ENCODE measurements at regions of chr2 and their contacts with region 1.

Region 1: GRCh38 chr2:151051574-151052220 is 210.0 kb downstream of the RBM43 start:
- DNase-seq: peak; percentile 73
- H3K4me3 Mint-ChIP-seq: no peak overlapping the region
- H3K27ac Mint-ChIP-seq: no peak overlapping the region
- H3K4me1 Mint-ChIP-seq: peaks cover 16% of the 10 kb centered on the region
- H3K27me3 Mint-ChIP-seq: no peaks in the 10 kb centered on the region
- CTCF ChIP-seq: peak; percentile 76

Region 2: GRCh38 chr2:149799013-149799705 is 1252.5 kb before region 1 on chr2:
- CTCF ChIA-PET with region 1: no interaction called
- POLR2A ChIA-PET with region 1: no interaction called
- intact Hi-C with region 1: loop called (anchors 5 kb)
- DNase-seq: peak; percentile 42
- H3K4me3 Mint-ChIP-seq: no peak overlapping the region
- H3K27ac Mint-ChIP-seq: no peak overlapping the region
- H3K4me1 Mint-ChIP-seq: no peaks in the 10 kb centered on the region
- H3K27me3 Mint-ChIP-seq: no peaks in the 10 kb centered on the region
- CTCF ChIP-seq: peak; percentile 33

Region 3: DNA sequence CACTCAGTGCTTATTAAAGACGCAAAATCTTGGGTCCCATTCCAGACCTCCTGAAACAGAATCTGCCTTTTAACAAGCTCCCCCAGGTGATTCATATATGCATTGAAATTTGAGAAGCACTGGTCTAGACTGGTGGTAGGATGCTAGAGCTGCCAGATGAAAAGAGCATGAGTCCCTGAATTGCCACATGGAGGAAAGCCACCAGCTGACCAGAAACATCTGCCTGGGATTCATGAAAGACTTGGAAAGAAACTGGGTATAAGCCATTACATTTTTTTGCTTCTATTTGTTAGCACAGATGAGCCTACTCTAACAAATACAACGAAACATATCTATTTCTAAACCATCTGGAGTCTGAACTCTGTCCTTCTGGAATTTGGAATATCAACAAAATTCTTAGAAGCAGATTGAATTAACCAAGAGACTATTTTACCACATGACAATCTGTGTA is 18.9 kb before region 1 on chr2:
- CTCF ChIA-PET with region 1: interaction called, 13 read pairs
- POLR2A ChIA-PET with region 1: no interaction called
- intact Hi-C with region 1: no loop called
- DNase-seq: peak; percentile 53
- H3K4me3 Mint-ChIP-seq: no peak overlapping the region
- H3K27ac Mint-ChIP-seq: no peak overlapping the region
- H3K4me1 Mint-ChIP-seq: peaks cover 15% of the 10 kb centered on the region
- H3K27me3 Mint-ChIP-seq: no peaks in the 10 kb centered on the region
- CTCF ChIP-seq: no peak

Region 4: DNA sequence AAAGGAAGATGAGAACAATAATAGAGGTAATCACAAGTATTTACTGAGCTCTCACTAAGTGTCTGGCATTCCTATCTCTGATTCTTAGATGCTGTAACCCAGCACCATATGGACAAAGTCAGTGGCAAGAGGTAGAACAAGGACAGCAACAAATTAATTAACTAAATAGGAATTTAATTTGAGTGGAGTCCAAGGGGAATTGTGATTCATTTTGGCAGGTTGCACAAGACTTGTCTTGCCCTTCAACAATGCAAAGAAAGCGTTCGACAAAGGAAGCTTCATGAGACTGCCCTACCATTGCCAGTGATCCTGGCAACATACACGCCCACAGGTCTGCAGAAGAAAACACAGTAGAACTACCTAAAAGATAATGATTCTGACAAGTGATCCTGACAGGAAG is 11.7 kb before region 1 on chr2:
- CTCF ChIA-PET with region 1: interaction called, 23 read pairs
- POLR2A ChIA-PET with region 1: interaction called, 9 read pairs
- intact Hi-C with region 1: no loop called
- DNase-seq: peak; percentile 82
- H3K4me3 Mint-ChIP-seq: no peak overlapping the region
- H3K27ac Mint-ChIP-seq: peak overlapping the region; percentile 78
- H3K4me1 Mint-ChIP-seq: peaks cover 31% of the 10 kb centered on the region
- H3K27me3 Mint-ChIP-seq: no peaks in the 10 kb centered on the region
- CTCF ChIP-seq: no peak

Measured in MCF 10A (cell line).